ENCODE measurements at regions of chr19 and their contacts with region 1.

Region 1: GRCh38 chr19:35168207-35168606 is 13.7 kb downstream of the FXYD5 start:
- DNase-seq: no peak
- ATAC-seq: no peak
- H3K4me3 ChIP-seq: no peak overlapping the region
- H3K4me3 Mint-ChIP-seq: no peak overlapping the region
- H3K27ac ChIP-seq: peak overlapping the region; percentile 50 to 68
- H3K27ac Mint-ChIP-seq: peak overlapping the region; percentile 91
- H3K4me1 ChIP-seq: peaks cover 69% of the 10 kb centered on the region
- H3K4me1 Mint-ChIP-seq: peaks cover 68% of the 10 kb centered on the region
- H3K27me3 ChIP-seq: no peaks in the 10 kb centered on the region
- H3K27me3 Mint-ChIP-seq: no peaks in the 10 kb centered on the region
- CTCF ChIP-seq: no peak

Region 2: GRCh38 chr19:35154525-35155406 is 13.4 kb before region 1 on chr19 and contains the start of gene FXYD5:
- CTCF ChIA-PET with region 1: interaction called, 9 read pairs
- POLR2A ChIA-PET with region 1: interaction called, 12 read pairs
- intact Hi-C with region 1: no loop called
- DNase-seq: peak; percentile 49 to 82 (median 71)
- ATAC-seq: peak; percentile 75
- H3K4me3 ChIP-seq: peak within 1 kb of the TSS; percentile 99
- H3K4me3 Mint-ChIP-seq: peak within 1 kb of the TSS; percentile 98
- H3K27ac ChIP-seq: peak within 1 kb of the TSS; percentile 80 to 89
- H3K27ac Mint-ChIP-seq: peak within 1 kb of the TSS; percentile 98
- H3K4me1 ChIP-seq: peaks cover 55% of the 10 kb centered on the region
- H3K4me1 Mint-ChIP-seq: peaks cover 71% of the 10 kb centered on the region
- H3K27me3 ChIP-seq: no peaks in the 10 kb centered on the region
- H3K27me3 Mint-ChIP-seq: no peaks in the 10 kb centered on the region
- CTCF ChIP-seq: no peak
- total RNA-seq, gene FXYD5: 587 to 615 TPM